ENCODE measurements at regions of chr19 and their contacts with region 1.

Region 1: GRCh38 chr19:43675269-43675879 is 5.4 kb upstream of the PLAUR start:
- DNase-seq: no peak
- H3K4me3 Mint-ChIP-seq: peak overlapping the region; percentile 1
- H3K27ac Mint-ChIP-seq: peak overlapping the region; percentile 28
- H3K4me1 Mint-ChIP-seq: peaks cover 12% of the 10 kb centered on the region
- H3K27me3 Mint-ChIP-seq: peaks cover 6% of the 10 kb centered on the region

Region 2: DNA sequence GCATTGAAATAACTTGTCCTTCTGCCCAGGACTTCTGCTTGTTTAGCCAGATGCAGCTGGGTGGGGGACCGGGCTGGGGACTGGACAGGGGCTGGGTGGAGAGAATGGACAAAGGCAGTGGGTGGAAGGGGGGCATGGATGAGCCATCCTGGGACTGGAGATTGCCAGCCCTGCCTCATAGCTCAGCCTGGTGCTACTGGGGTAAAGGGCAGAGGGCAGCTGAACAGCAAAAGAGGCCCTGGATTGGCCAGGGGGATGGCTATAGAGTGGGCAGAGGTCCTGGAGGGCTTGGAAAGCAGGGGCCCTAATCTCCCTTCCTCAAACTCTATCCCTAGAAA is 12.3 kb after region 1 on chr19:
- intact Hi-C with region 1: no loop called
- DNase-seq: no peak
- H3K4me3 Mint-ChIP-seq: no peak overlapping the region
- H3K27ac Mint-ChIP-seq: no peak overlapping the region
- H3K4me1 Mint-ChIP-seq: no peaks in the 10 kb centered on the region
- H3K27me3 Mint-ChIP-seq: no peaks in the 10 kb centered on the region

Region 3: DNA sequence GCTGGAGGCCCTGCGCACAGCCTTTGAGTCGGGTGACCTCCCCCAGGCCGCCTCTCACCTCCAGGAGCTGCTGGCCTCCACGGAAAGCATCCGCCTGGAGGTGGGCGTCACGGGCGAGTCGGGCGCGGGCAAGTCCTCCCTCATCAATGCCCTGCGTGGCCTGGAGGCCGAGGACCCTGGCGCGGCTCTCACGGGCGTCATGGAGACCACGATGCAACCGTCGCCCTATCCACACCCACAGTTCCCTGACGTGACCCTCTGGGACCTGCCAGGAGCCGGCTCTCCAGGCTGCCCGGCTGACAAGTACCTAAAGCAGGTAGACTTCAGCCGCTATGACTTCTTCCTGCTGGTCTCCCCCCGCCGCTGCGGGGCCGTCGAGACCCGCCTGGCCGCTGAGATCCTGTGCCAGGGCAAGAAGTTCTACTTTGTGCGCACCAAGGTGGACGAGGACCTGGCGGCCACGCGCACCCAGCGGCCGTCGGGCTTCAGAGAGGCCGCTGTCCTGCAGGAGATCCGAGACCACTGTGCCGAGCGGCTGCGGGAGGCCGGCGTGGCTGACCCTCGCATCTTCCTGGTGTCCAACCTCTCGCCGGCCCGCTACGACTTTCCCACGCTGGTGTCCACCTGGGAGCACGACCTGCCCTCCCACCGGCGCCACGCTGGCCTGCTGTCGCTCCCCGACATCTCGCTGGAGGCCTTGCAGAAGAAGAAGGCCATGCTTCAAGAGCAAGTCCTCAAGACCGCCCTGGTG is 43.4 kb after region 1 on chr19:
- intact Hi-C with region 1: loop called (anchors 5 kb)
- DNase-seq: no peak
- H3K4me3 Mint-ChIP-seq: no peak overlapping the region
- H3K27ac Mint-ChIP-seq: no peak overlapping the region
- H3K4me1 Mint-ChIP-seq: no peaks in the 10 kb centered on the region
- H3K27me3 Mint-ChIP-seq: no peaks in the 10 kb centered on the region